ENCODE measurements at regions of chr2 and their contacts with region 1.

Region 1: DNA sequence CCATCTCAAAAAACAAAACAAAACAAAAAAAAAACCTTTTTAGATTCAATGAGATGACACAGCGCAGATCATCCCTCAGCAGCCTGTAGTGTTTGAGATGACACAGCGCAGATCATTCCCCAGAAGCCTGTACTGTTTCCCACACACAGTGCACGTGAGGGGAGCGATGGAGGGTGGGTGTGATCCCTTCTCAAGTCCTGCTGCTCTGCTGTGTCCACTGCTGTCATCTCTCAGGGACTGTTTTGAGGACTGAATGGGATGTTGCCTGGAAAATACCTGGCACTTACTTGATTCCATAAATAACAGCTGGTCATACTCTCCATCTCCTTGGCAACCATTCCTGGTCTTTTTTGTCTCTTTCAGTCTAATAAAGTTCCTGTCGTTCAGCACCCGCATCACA is 25.7 kb downstream of the TGOLN2 start:
- DNase-seq: no peak
- ATAC-seq: no peak
- H3K4me3 Mint-ChIP-seq: no peak overlapping the region
- H3K27ac Mint-ChIP-seq: no peak overlapping the region
- H3K4me1 Mint-ChIP-seq: peaks cover 7% of the 10 kb centered on the region
- H3K27me3 Mint-ChIP-seq: peaks cover 3% of the 10 kb centered on the region
- CTCF ChIP-seq: no peak

Region 2: GRCh38 chr2:85066874-85067351 is 235.2 kb before region 1 on chr2:
- CTCF ChIA-PET with region 1: interaction called, 12 read pairs
- POLR2A ChIA-PET with region 1: no interaction called
- intact Hi-C with region 1: no loop called
- DNase-seq: peak; percentile 81
- ATAC-seq: peak; percentile 82
- H3K4me3 Mint-ChIP-seq: no peak overlapping the region
- H3K27ac Mint-ChIP-seq: no peak overlapping the region
- H3K4me1 Mint-ChIP-seq: peaks cover 4% of the 10 kb centered on the region
- H3K27me3 Mint-ChIP-seq: peaks cover 15% of the 10 kb centered on the region
- CTCF ChIP-seq: peak; percentile 70

Region 3: GRCh38 chr2:85266146-85267041 is 35.7 kb before region 1 on chr2:
- CTCF ChIA-PET with region 1: interaction called, 136 read pairs
- POLR2A ChIA-PET with region 1: no interaction called
- intact Hi-C with region 1: loop called (anchors 2 kb)
- DNase-seq: peak; percentile 86
- ATAC-seq: peak; percentile 87
- H3K4me3 Mint-ChIP-seq: no peak overlapping the region
- H3K27ac Mint-ChIP-seq: no peak overlapping the region
- H3K4me1 Mint-ChIP-seq: no peaks in the 10 kb centered on the region
- H3K27me3 Mint-ChIP-seq: no peaks in the 10 kb centered on the region
- CTCF ChIP-seq: peak; percentile 96

Region 4: DNA sequence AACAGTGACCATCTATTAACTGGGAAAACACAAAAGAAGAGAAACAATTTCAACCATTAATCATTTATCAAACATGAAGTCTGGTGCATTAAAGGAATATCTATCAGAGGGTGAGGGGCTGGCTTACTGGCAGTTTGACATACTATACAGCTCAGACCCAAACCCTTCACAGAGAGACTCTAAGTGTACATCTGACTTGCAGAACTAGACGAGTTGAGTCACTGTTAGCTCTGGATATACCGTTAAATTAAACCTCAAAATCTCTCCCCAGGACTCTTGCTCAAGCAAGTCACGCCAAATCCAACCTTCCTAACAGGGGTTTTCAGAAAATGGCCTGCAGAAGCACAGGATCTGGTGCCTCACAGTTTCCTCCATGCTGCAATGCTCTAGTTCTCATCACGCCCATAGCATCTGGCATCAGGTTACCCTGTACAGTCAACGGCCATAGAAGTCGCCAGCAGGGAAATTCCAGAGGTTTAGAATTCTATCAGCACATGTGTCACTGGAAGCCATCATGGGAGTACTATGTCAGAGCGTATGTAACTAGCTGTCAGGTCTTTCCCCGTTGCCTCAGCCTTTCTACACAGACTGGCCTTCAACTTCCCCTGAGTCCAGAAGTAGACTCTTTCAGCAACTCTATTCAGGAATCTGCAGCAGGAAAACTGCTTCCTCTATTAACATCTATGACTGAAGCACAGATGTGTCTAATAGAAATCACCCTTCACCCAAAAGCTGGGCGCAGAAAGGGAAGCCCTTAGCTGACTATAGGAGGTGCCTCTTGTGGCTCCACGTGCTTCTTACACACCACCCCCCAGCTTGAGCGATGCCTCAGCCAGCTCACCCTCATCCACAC is 16.3 kb after region 1 on chr2:
- CTCF ChIA-PET with region 1: interaction called, 19 read pairs
- POLR2A ChIA-PET with region 1: interaction called, 5 read pairs
- intact Hi-C with region 1: no loop called
- DNase-seq: peak; percentile 63
- ATAC-seq: peak; percentile 82
- H3K4me3 Mint-ChIP-seq: peak overlapping the region; percentile 26
- H3K27ac Mint-ChIP-seq: peak overlapping the region; percentile 89
- H3K4me1 Mint-ChIP-seq: peaks cover 61% of the 10 kb centered on the region
- H3K27me3 Mint-ChIP-seq: no peaks in the 10 kb centered on the region
- CTCF ChIP-seq: no peak